Breast epithelium (tissue), 4 donors: ENCODE measurements at regions of chr2 and their contacts with region 1.

Region 1: DNA sequence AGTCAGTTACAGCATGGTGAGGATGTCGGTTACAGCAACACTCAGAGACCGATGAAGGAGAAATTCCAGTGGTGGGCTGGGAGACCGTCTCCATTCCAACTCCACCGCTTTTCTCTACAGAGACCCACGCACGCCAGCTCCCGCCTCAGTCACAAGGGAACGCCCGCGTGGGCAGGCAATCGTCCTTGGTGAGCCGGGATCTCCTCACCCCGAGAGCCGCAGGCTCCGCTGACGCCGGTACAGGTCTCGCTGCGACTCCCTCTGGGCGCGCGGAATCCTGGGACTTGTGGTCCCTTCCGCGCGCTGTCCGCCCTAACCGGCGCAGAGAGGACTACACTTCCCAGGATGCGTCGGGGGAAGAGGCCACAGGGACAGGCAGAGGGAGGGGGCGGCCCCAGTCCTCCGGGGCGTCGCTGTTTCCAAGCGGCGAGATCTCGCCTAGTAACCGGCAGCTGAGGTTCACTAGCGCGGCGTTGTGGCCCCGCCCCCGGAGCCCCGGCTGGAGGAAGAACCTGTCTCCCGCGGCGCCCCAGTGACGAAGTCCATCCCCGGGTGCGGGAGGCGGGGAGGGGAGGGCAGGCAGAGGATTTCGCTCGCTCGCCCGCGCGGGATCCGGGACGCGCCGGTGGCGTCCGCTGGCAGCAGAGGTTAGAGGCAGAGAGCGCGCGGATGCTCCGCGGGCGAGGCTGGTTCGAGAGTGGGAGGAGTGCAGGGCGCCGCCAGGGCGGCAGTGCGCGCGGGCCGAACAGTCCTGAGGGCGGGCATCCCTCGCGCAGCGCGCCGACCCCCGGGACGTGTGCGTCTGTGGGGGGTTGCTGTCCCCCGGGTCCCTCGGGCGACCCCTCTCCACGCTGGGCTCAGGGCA is at the start of gene EML6:
- DNase-seq: peak; percentile 94 to 96
- H3K4me3 ChIP-seq: peak within 1 kb of the TSS; percentile 74 to 82 (median 78)
- H3K27ac ChIP-seq: peak within 1 kb of the TSS; percentile 73 to 84
- H3K4me1 ChIP-seq: no peaks in the 10 kb centered on the region
- H3K27me3 ChIP-seq: no peaks in the 10 kb centered on the region
- CTCF ChIP-seq: no peak
- POLR2A ChIP-seq: peak; percentile 31
- total RNA-seq, gene EML6: 1.9 to 5.9 (median 2.3) TPM

Region 2: DNA sequence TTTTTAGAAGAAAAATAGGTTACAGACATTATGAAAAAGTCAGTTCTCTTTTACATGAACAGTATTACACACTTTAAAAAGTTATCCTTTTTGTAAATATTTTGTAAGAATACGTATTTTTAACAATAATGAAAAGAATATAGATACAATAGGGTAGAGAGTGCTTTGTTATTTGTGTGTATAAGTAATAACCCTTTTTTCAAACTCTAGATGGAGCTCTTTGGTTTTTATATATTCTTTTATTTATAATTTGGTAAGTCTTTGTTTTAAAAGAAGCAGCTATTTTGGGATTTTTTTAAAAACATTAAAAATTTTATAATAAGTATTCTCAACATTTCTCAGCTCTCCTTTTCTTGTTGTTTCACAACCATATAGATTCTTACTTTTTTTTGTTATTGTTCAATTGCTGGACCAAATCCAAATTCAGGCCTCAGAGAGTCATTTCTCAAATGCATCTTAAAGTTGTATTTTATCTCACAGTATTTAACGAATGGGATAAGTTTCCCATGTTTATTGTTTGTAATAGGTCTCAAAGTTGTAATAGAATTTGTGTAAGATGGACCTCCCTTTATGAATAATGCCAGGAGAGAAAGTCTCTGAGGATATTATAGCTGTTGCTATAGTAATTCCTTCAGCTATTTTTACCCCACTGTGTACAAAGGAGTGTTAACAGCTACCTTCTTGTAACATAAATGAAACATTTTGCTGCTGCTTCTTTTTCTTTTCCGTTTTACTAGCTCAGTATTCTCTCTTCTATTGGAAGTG is 561.5 kb before region 1 on chr2:
- intact Hi-C with region 1: no loop called
- DNase-seq: no peak
- H3K4me3 ChIP-seq: no peak overlapping the region
- H3K27ac ChIP-seq: no peak overlapping the region
- H3K4me1 ChIP-seq: no peaks in the 10 kb centered on the region
- H3K27me3 ChIP-seq: no peaks in the 10 kb centered on the region
- CTCF ChIP-seq: no peak
- POLR2A ChIP-seq: no peak

Region 3: DNA sequence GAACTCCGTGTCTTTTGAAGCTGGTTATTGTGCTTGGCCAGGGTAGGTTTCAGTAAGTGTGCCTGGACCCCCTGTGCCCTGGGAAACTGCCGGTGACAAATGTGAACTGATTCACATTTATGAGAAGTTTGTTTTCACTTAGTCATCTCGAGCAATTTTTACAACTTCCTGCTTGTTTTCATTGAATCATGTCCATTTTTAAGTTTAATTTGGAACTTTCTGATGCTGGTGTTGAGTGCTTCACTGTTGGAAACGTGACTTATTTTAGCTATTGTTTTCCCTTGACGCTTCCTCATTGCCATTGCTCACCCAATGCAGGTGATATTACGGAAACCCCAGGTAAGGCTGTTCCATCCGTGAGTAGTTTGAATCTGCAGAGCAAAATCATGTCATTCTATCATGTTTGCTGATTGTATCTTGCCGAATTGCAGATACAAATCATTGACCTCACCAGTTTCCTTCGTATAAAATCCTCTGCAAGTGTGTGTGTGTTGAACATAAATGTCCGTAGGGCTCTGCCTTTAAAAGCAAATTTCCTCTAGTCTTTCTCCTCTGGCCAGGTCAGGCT is 229.7 kb after region 1 on chr2:
- intact Hi-C with region 1: no loop called
- DNase-seq: no peak
- H3K4me3 ChIP-seq: no peak overlapping the region
- H3K27ac ChIP-seq: no peak overlapping the region
- H3K4me1 ChIP-seq: peaks cover 0 to 5% of the 10 kb centered on the region in 2 donors
- H3K27me3 ChIP-seq: no peaks in the 10 kb centered on the region
- CTCF ChIP-seq: no peak
- POLR2A ChIP-seq: no peak

Region 4: DNA sequence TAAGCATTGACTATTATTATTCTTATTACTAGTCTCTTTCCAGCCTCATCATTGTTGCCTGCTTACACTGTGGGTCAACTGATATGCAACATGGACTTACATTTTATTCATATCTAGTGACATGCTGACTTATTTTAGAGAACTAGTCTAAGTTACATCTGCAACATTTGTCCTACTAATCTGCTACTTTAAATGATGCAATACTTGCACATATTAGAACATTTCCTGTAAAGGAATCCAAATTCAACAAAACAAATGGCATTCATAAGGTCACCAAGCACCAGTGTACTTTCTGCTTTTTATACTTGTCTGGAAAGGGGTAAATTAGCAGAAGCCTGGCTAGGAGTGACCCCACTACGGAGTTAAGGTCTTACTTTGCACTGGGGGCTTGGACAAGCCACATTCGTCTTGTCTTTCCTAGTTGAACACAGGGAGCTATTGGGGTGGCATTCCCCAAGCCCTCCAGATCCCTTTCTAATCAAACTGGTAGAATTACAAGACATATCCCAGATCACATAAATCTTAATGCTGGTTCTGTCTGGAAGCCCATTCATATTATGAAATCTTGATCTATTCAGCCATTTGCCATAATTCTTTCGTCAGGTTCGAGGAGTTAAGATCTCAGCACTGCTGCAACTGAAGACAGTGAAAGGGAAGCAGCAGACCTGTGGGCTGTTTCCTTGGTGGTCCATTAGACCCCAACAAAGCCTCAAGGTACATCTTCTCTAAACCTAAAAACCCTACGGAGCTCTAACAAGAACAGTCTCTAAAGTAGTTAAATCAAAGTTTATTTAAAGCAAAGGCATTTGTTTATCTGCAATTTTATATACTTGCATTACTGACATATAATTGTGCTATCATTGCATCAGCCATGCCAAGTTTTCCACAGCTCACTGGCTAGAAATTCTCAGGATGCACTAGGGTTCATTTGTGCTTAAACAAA is 376.8 kb after region 1 on chr2:
- intact Hi-C with region 1: loop called (anchors 5 kb)
- DNase-seq: no peak
- H3K4me3 ChIP-seq: no peak overlapping the region
- H3K27ac ChIP-seq: peak overlapping the region; percentile 62 to 88
- H3K4me1 ChIP-seq: no peaks in the 10 kb centered on the region
- H3K27me3 ChIP-seq: no peaks in the 10 kb centered on the region
- CTCF ChIP-seq: no peak
- POLR2A ChIP-seq: no peak